Heart left ventricle (tissue), 16 donors: ENCODE measurements at regions of chr21 and their contacts with region 1.

Region 1: GRCh38 chr21:35482933-35483662 is 434.0 kb upstream of the RUNX1 start:
- DNase-seq: no peak
- ATAC-seq: no peak
- H3K4me3 ChIP-seq: no peak overlapping the region
- H3K27ac ChIP-seq: no peak overlapping the region
- H3K4me1 ChIP-seq: peaks cover 0 to 9% (median 0%) of the 10 kb centered on the region in 12 donors
- H3K27me3 ChIP-seq: peaks cover 0 to 4% (median 0%) of the 10 kb centered on the region in 9 donors
- CTCF ChIP-seq: no peak
- POLR2A ChIP-seq: no peak

Region 2: GRCh38 chr21:35400233-35400957 is 82.7 kb before region 1 on chr21:
- intact Hi-C with region 1: no loop called
- DNase-seq: peak in 1 of 5 donors; percentile 22
- ATAC-seq: peak in 3 of 4 donors; percentile 63 to 73 (median 67)
- H3K4me3 ChIP-seq: peak overlapping the region in 1 of 12 donors; percentile 19
- H3K27ac ChIP-seq: peak overlapping the region in 2 of 12 donors; percentile 8 to 42
- H3K4me1 ChIP-seq: peaks cover 0 to 27% (median 0%) of the 10 kb centered on the region in 12 donors
- H3K27me3 ChIP-seq: peaks cover 0 to 20% (median 0%) of the 10 kb centered on the region in 9 donors
- CTCF ChIP-seq: peak in 11 of 12 donors; percentile 18 to 59 (median 48)
- POLR2A ChIP-seq: no peak

Region 3: GRCh38 chr21:35540950-35541638 is 58.0 kb after region 1 on chr21:
- intact Hi-C with region 1: loop called in 1 of 10 experiments (anchors 10 kb)
- DNase-seq: no peak
- ATAC-seq: no peak
- H3K4me3 ChIP-seq: no peak overlapping the region
- H3K27ac ChIP-seq: no peak overlapping the region
- H3K4me1 ChIP-seq: no peaks in the 10 kb centered on the region
- H3K27me3 ChIP-seq: no peaks in the 10 kb centered on the region
- CTCF ChIP-seq: no peak
- POLR2A ChIP-seq: no peak